Posterior vena cava (tissue), 2 donors: ENCODE measurements at regions of chr2 and their contacts with region 1.

Region 1: GRCh38 chr2:106332054-106332453 is 136.2 kb downstream of the RGPD3 start:
- DNase-seq: no peak

Region 2: DNA sequence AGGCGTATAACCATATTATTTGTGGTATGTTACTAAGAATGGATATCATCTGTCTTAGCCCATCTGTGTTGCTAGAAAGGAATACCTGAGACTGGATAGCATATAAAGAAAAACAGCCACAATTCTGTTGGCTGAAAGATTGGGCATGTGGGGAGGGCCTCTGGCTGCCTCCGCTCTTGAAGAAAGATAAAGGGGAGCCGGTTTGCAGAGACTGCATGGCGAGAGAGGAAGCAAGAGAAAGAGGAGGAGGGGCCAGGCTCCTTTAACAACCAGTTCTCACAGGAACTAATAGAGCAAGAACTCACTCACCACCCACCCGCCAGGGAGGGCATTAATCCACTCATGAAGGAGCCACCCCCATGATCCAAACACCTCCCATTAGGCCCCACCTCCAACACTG is 108.7 kb before region 1 on chr2:
- intact Hi-C with region 1: no loop called
- DNase-seq: no peak

Region 3: DNA sequence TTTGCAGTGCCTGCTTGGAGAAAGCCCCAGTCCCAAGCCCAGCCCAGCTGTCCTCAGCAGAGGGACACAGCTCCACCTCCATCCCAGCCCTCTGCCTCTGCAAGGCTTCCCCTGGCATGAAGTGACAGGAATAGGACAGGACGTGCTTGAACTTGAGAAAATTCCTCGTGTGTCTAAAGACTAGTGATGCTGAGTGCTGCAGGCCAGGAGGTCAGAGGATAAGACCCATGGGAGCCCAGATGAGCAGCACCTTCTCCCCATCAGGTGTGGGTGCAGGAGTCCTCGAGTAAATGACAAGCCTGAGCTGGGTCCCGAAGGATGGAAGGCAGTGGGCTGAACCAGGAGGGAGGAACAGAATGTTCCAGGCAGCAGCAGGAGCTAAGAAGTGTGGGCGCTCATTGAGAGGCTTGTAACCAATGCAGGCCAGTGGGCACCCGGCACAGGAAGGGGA is 70.2 kb before region 1 on chr2:
- intact Hi-C with region 1: no loop called
- DNase-seq: no peak

Region 4: GRCh38 chr2:106342831-106343251 is 10.8 kb after region 1 on chr2:
- intact Hi-C with region 1: loop called in 1 of 2 experiments (anchors 1 kb)
- DNase-seq: no peak

Region 5: DNA sequence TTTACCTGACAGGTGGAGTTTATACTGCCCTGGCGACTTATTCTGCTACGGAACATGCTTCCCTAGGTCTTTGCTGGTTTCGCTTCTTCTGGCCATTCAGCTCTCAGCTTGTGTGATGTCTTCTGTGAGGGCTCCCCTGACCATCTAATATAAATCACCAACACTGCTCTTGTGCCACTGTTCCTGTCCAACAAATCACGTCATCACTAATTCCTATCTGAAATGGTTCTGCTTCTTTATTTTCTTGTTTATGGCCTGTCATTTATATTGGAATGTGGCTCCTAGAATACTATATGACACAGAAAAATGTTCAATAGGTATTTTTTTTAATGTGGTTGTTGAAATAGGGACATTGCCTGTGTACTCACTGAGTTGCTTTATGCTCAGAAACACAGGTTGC is 326.6 kb after region 1 on chr2:
- intact Hi-C with region 1: no loop called
- DNase-seq: no peak